CD14-positive monocyte (primary cell): ENCODE measurements at regions of chr2 and their contacts with region 1.

Region 1: DNA sequence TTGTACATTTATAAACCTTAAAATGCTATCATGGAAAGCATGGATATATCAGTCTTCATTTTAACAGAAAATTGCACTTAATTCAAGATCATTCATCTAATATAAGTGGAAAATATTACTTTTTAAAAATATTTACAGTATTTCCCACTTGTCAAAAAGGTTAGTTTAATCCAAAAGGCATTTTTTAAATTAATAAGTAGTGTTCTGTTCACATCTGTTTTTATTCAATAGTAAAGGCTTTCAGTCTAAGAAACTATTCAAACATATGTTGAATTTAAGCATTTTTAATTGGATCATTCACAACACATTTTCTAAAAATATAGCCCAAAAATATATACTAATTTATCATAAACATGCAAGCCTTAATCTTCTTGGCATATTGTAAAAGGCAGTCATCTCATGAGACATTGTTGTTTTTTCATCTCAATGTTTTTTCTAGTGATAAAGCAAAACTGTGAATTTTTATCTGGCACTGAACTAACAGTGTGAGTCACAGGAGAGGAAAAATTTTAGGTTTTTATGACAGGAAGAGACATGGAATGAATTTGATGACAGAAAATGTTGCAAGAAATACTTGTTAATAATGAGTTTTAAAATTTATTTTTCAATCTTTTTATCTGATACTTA is 1642.5 kb upstream of the TMEFF2 start:
- DNase-seq: no peak
- H3K4me3 ChIP-seq: no peak overlapping the region
- H3K4me3 Mint-ChIP-seq: no peak overlapping the region
- H3K27ac ChIP-seq: no peak overlapping the region
- H3K27ac Mint-ChIP-seq: no peak overlapping the region
- H3K4me1 ChIP-seq: no peaks in the 10 kb centered on the region
- H3K4me1 Mint-ChIP-seq: no peaks in the 10 kb centered on the region
- H3K27me3 ChIP-seq: no peaks in the 10 kb centered on the region
- H3K27me3 Mint-ChIP-seq: no peaks in the 10 kb centered on the region
- CTCF ChIP-seq: no peak

Region 2: GRCh38 chr2:193824474-193824873 is 12.8 kb before region 1 on chr2:
- intact Hi-C with region 1: loop called in 1 of 2 experiments (anchors 1 kb)
- DNase-seq: no peak
- H3K4me3 ChIP-seq: no peak overlapping the region
- H3K4me3 Mint-ChIP-seq: no peak overlapping the region
- H3K27ac ChIP-seq: no peak overlapping the region
- H3K27ac Mint-ChIP-seq: no peak overlapping the region
- H3K4me1 ChIP-seq: no peaks in the 10 kb centered on the region
- H3K4me1 Mint-ChIP-seq: no peaks in the 10 kb centered on the region
- H3K27me3 ChIP-seq: no peaks in the 10 kb centered on the region
- H3K27me3 Mint-ChIP-seq: peaks cover 0 to 1% (median 0%) of the 10 kb centered on the region in 3 donors
- CTCF ChIP-seq: no peak

Region 3: GRCh38 chr2:193868833-193869232 is 31.6 kb after region 1 on chr2:
- intact Hi-C with region 1: no loop called
- DNase-seq: no peak
- H3K4me3 ChIP-seq: no peak overlapping the region
- H3K4me3 Mint-ChIP-seq: no peak overlapping the region
- H3K27ac ChIP-seq: no peak overlapping the region
- H3K27ac Mint-ChIP-seq: no peak overlapping the region
- H3K4me1 ChIP-seq: no peaks in the 10 kb centered on the region
- H3K4me1 Mint-ChIP-seq: no peaks in the 10 kb centered on the region
- H3K27me3 ChIP-seq: no peaks in the 10 kb centered on the region
- H3K27me3 Mint-ChIP-seq: peaks cover 0 to 1% (median 0%) of the 10 kb centered on the region in 3 donors
- CTCF ChIP-seq: no peak